ENCODE measurements at regions of chr19 and their contacts with region 1.

Region 1: GRCh38 chr19:16779539-16780163 is 49.5 kb upstream of the SIN3B start:
- DNase-seq: no peak
- H3K4me3 ChIP-seq: no peak overlapping the region
- H3K27ac ChIP-seq: no peak overlapping the region
- H3K4me1 ChIP-seq: no peaks in the 10 kb centered on the region
- H3K27me3 ChIP-seq: no peaks in the 10 kb centered on the region
- CTCF ChIP-seq: no peak
- POLR2A ChIP-seq: no peak

Region 2: DNA sequence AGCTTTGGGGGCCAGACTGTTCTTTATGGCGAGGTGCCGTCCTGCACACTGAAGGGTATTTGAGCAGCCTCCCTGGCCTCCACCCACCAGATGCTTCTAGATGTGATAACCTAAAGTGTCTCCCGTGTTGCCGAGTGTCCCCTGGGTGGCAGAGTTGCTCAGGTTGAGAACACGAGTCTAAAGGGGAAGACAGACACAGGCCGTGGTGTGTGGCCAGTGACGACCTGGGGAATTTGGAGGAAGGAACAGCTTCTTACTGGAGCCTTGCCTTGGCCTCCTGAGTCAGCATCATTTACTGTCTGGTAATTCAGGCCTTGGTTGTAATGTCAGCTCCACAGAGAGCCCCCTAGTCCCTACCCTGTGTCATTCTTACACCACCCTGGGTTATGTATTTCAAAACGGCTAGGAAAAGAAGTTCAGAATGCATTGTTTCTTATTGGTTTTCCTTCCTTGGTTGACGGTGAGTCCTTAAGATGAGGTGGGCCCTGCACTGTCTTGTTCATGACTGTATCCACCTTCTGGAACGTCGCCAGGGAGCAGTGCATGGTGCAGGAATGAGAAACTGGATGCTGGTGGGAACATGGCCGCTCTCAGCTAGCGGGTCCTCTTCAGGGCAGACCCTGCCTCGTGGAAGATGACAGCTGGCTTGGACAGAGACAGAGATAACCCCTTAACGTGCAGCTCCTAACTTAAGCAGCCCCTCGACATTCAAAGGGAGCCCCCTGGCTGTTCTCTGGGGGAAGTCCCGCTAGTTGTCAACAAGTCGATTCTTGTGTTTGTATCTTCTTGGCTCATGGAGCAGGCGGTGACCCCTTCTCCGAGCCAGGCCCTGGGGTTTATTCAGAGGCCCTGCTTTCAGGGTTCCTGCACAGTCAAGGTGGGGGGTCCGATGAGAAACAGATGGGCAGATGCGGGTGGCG is 56.7 kb after region 1 on chr19:
- intact Hi-C with region 1: no loop called
- DNase-seq: peak in 1 of 2 donors; percentile 26
- H3K4me3 ChIP-seq: no peak overlapping the region
- H3K27ac ChIP-seq: peak overlapping the region in 1 of 2 donors; percentile 1
- H3K4me1 ChIP-seq: no peaks in the 10 kb centered on the region
- H3K27me3 ChIP-seq: no peaks in the 10 kb centered on the region
- CTCF ChIP-seq: no peak
- POLR2A ChIP-seq: no peak

Region 3: DNA sequence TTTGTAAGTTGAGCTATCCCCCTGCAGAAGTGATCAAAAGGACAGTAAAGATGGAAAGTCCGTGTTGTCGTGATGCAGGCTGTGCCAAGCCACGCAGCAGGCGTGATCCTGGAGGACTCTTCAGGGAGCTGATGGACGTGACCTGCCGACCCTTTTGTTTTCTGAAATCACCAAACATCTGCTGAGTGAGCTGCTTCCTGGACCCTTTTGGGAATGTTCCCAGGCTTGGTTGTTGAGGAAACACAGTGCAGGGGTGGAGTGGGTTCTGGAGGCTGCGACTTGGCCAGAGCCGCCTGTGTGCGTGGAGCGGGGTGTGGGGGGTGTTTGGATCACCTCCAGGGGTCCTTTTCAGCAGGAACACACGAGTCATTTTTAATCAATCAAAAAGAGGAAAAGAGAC is 262.3 kb after region 1 on chr19:
- intact Hi-C with region 1: loop called (anchors 5 kb)
- DNase-seq: no peak
- H3K4me3 ChIP-seq: no peak overlapping the region
- H3K27ac ChIP-seq: no peak overlapping the region
- H3K4me1 ChIP-seq: no peaks in the 10 kb centered on the region
- H3K27me3 ChIP-seq: no peaks in the 10 kb centered on the region
- CTCF ChIP-seq: no peak
- POLR2A ChIP-seq: no peak